ENCODE measurements at regions of chr1 and their contacts with region 1.

Region 1: DNA sequence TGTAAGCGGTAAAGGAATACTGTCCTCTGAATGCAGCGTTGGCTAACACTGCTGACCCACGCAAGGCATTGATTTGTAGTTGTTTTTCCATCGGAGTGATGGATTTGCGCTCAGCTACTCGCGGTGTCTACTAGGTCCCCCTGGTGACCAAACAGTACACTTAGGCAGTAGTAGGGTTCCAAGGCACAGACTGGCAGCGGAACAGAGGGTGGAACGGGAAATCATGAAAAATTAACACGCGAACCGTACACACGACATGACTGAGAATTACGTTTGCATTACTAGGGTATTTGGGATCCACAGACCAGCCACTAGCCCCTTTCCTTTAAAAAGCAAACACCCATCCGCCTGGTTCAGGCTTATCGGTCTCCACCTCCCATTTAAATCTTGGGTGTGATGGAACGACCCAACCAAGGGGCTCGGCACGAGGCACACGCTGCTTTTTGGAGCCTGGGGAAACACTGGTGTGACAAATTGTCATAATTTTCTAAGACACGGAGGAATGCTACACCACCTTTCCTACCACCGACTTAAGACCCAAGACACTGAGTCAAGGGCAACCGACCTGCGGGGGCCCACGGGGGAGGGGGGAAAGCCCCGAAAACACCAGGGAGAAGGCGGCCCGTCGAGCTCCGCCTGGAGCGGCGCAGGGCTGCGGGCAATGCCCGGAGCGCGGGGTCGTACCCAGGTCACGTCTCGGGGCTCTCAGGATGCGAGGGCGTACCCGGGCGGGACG is 699 bp downstream of the DIPK1A start:
- DNase-seq: peak; percentile 73
- H3K4me3 Mint-ChIP-seq: peak overlapping the region; percentile 94
- H3K27ac Mint-ChIP-seq: peak overlapping the region; percentile 93
- H3K4me1 Mint-ChIP-seq: peaks cover 40% of the 10 kb centered on the region
- H3K27me3 Mint-ChIP-seq: no peaks in the 10 kb centered on the region

Region 2: GRCh38 chr1:92851729-92852128 is 108.8 kb before region 1 on chr1:
- CTCF ChIA-PET with region 1: interaction called, 168 read pairs
- POLR2A ChIA-PET with region 1: interaction called, 65 read pairs
- DNase-seq: no peak
- H3K4me3 Mint-ChIP-seq: no peak overlapping the region
- H3K27ac Mint-ChIP-seq: no peak overlapping the region
- H3K4me1 Mint-ChIP-seq: peaks cover 12% of the 10 kb centered on the region
- H3K27me3 Mint-ChIP-seq: no peaks in the 10 kb centered on the region

Region 3: GRCh38 chr1:92882819-92883218 is 77.7 kb before region 1 on chr1:
- CTCF ChIA-PET with region 1: interaction called, 10 read pairs
- POLR2A ChIA-PET with region 1: interaction called, 24 read pairs
- DNase-seq: peak; percentile 48
- H3K4me3 Mint-ChIP-seq: no peak overlapping the region
- H3K27ac Mint-ChIP-seq: peak overlapping the region; percentile 66
- H3K4me1 Mint-ChIP-seq: peaks cover 29% of the 10 kb centered on the region
- H3K27me3 Mint-ChIP-seq: no peaks in the 10 kb centered on the region

Region 4: GRCh38 chr1:92994105-92994712 is 33.6 kb after region 1 on chr1:
- CTCF ChIA-PET with region 1: interaction called, 176 read pairs
- POLR2A ChIA-PET with region 1: interaction called, 82 read pairs
- DNase-seq: peak; percentile 74
- H3K4me3 Mint-ChIP-seq: no peak overlapping the region
- H3K27ac Mint-ChIP-seq: no peak overlapping the region
- H3K4me1 Mint-ChIP-seq: peaks cover 51% of the 10 kb centered on the region
- H3K27me3 Mint-ChIP-seq: peaks cover 4% of the 10 kb centered on the region

Region 5: DNA sequence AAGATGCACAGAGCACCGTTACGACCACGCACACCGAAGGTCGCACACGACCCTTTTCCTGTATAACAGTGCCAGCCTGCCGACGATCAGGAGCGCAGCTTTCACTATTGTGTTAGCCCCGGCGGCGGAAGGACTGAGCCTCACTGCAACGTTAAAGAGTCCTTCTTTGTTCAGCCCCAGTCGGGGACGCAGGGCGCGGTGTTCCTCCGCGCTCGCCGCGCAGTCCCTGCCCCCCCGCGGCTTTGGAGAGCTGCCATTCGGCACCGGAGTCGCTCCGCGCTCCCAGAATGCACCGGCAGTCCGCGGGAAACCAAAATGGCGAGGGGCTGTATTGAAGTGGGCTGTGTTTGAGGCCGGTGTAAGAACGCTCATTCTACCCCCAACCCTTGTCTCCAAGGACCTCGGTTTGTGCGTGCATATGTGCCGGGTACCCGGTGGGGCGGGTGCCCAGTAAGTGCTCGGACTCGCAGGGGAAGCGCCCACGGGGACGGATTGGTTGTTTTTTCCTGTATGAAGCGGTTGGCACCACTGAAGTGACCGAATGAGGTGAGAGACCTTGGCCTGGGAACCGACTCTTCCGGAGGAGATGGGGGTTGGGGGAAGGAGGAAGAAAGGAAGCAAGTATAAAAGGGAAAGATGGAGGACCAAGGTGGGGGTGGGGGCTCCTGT is 118.6 kb after region 1 on chr1 and contains the start of gene MTF2:
- CTCF ChIA-PET with region 1: interaction called, 21 read pairs
- POLR2A ChIA-PET with region 1: interaction called, 47 read pairs
- DNase-seq: peak; percentile 95
- H3K4me3 Mint-ChIP-seq: peak within 1 kb of the TSS; percentile 100
- H3K27ac Mint-ChIP-seq: peak within 1 kb of the TSS; percentile 94
- H3K4me1 Mint-ChIP-seq: peaks cover 42% of the 10 kb centered on the region
- H3K27me3 Mint-ChIP-seq: no peaks in the 10 kb centered on the region
- total RNA-seq, gene MTF2: 55.5 to 56.6 TPM

Region 6: DNA sequence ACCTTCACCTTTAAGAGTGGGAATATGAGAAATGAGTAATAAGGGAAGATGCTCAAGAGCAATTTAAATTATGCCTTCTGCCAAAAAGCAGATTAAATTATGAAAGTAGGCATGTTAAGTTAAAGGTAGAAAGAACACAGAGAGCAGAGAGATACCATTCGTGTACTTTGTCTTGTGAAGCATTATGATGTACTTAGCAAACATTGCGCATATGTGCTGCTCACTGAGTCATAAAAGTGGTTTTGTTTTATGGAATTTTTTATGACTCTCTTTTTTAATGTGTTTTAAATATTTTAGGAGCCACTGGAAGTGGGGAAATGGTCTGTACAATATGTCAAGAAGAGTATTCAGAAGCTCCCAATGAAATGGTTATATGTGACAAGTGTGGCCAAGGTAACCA is 153.8 kb after region 1 on chr1:
- CTCF ChIA-PET with region 1: no interaction called
- POLR2A ChIA-PET with region 1: no interaction called
- DNase-seq: no peak
- H3K4me3 Mint-ChIP-seq: no peak overlapping the region
- H3K27ac Mint-ChIP-seq: no peak overlapping the region
- H3K4me1 Mint-ChIP-seq: peaks cover 7% of the 10 kb centered on the region
- H3K27me3 Mint-ChIP-seq: no peaks in the 10 kb centered on the region

Measured in activated CD4-positive, alpha-beta memory T cell treated with anti-CD3 and anti-CD28 coated beads, Interleukin-2, amount 10 ng/mL, durations not matched to agents 7 days and 5 days (primary cell).